ENCODE measurements at regions of chr2 and their contacts with region 1.

Region 1: GRCh38 chr2:47767880-47768609 is 14.9 kb upstream of the MSH6 start:
- DNase-seq: peak; percentile 79
- H3K4me3 ChIP-seq: no peak overlapping the region
- H3K27ac ChIP-seq: no peak overlapping the region
- H3K4me1 ChIP-seq: no peaks in the 10 kb centered on the region
- H3K27me3 ChIP-seq: no peaks in the 10 kb centered on the region
- CTCF ChIP-seq: peak; percentile 84 to 99 (median 93)
- EP300 ChIP-seq: no peak
- POLR2A ChIP-seq: no peak

Region 2: DNA sequence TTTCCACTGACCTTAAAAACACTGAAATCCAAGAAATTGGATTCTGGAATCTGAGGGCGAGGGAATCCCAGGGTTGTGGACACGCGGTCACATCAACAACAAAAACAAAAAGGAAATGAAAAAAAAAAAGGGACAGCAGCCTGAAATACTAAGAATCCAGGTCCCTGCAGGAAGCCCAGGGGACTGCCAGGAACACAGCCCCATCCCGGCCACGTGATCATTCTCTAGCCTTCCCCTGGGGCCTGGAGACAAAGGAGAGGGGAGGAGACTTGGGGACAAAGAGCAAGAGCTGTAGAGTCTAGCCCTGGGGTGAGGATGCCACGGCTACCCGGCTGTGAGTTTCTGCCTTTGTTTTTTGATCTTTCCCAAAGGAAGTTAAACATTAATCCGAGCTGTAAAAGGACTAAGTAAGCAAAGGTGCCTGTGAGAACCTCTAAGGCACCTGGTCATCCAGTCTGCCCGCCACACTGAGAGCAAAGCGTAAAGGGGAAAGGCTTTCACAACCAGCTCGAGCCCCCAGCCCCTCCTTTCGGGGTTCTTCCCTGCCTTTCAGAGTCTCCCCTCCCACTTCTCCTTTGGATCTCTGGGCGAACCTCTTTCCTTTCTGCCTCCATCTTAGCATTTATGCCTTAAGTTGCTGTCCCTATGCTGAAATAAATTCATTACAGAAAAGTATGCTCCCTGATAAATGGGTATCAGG is 423.0 kb before region 1 on chr2:
- intact Hi-C with region 1: loop called (anchors 5 kb)
- DNase-seq: peak; percentile 76
- H3K4me3 ChIP-seq: peak overlapping the region in 3 of 4 donors; percentile 4 to 22 (median 21)
- H3K27ac ChIP-seq: peak overlapping the region; percentile 8 to 51 (median 33)
- H3K4me1 ChIP-seq: peaks cover 0 to 24% (median 17%) of the 10 kb centered on the region in 4 donors
- H3K27me3 ChIP-seq: no peaks in the 10 kb centered on the region
- CTCF ChIP-seq: peak in 3 of 4 experiments; percentile 14 to 36 (median 22)
- EP300 ChIP-seq: no peak
- POLR2A ChIP-seq: peak in 1 of 2 donors; percentile 51

Region 3: GRCh38 chr2:47737191-47737975 is 30.7 kb before region 1 on chr2:
- intact Hi-C with region 1: no loop called
- DNase-seq: no peak
- H3K4me3 ChIP-seq: no peak overlapping the region
- H3K27ac ChIP-seq: no peak overlapping the region
- H3K4me1 ChIP-seq: no peaks in the 10 kb centered on the region
- H3K27me3 ChIP-seq: no peaks in the 10 kb centered on the region
- CTCF ChIP-seq: no peak
- EP300 ChIP-seq: no peak
- POLR2A ChIP-seq: no peak

Region 4: GRCh38 chr2:47815764-47816163 is 47.7 kb after region 1 on chr2:
- intact Hi-C with region 1: no loop called
- DNase-seq: no peak
- H3K4me3 ChIP-seq: no peak overlapping the region
- H3K27ac ChIP-seq: no peak overlapping the region
- H3K4me1 ChIP-seq: peaks cover 0 to 11% (median 3%) of the 10 kb centered on the region in 4 donors
- H3K27me3 ChIP-seq: no peaks in the 10 kb centered on the region
- CTCF ChIP-seq: no peak
- EP300 ChIP-seq: no peak
- POLR2A ChIP-seq: no peak

Region 5: GRCh38 chr2:48279344-48280090 is 511.5 kb after region 1 on chr2:
- intact Hi-C with region 1: no loop called
- DNase-seq: no peak
- H3K4me3 ChIP-seq: no peak overlapping the region
- H3K27ac ChIP-seq: no peak overlapping the region
- H3K4me1 ChIP-seq: no peaks in the 10 kb centered on the region
- H3K27me3 ChIP-seq: no peaks in the 10 kb centered on the region
- CTCF ChIP-seq: no peak
- EP300 ChIP-seq: no peak
- POLR2A ChIP-seq: no peak

Region 6: GRCh38 chr2:48420512-48421197 is 652.6 kb after region 1 on chr2:
- intact Hi-C with region 1: loop called (anchors 5 kb)
- DNase-seq: peak; percentile 91
- H3K4me3 ChIP-seq: no peak overlapping the region
- H3K27ac ChIP-seq: no peak overlapping the region
- H3K4me1 ChIP-seq: peaks cover 0 to 9% (median 4%) of the 10 kb centered on the region in 4 donors
- H3K27me3 ChIP-seq: peaks cover 0 to 2% (median 0%) of the 10 kb centered on the region in 3 donors
- CTCF ChIP-seq: peak; percentile 86 to 98 (median 94)
- EP300 ChIP-seq: no peak
- POLR2A ChIP-seq: no peak

Measured in sigmoid colon (tissue), 7 donors.